ENCODE measurements at regions of chr4 and their contacts with region 1.

Region 1: GRCh38 chr4:140052050-140052449 is 101.9 kb downstream of the MAML3 start:
- DNase-seq: peak; percentile 73
- H3K4me3 ChIP-seq: no peak overlapping the region
- H3K27ac ChIP-seq: no peak overlapping the region
- H3K4me1 ChIP-seq: peaks cover 11% of the 10 kb centered on the region
- H3K27me3 ChIP-seq: no peaks in the 10 kb centered on the region

Region 2: DNA sequence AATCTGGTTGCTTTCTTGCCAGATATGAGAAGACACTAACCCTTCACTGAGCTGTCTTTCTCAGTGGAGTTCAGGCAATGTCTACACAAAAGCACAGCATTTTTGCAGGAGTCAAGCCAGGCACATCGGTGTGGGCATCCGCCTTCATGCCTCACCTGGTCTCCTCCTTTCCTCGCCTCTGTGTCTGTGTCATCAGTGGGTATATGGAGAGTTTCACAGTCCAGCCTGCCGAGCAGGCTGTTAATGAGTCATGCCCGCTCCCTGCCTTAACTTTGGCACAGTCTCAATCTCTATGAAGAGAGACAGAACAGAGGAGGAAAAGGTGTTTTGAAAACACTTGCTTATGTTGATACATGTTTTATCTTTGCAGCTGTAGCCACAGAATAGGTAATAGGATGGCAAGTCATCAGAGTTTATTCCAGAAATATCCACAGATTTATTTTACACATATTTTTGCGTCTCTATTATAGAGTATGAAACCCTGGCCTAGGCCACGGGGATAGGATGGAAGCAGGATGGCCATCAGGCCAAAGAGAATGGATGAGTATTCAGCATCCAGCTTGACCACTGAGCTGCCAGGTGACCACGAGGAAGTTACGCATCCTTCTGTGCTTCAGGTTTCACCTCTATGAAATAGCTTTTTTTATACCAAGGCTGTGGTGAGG is 134.7 kb after region 1 on chr4:
- in situ Hi-C with region 1: no loop called
- DNase-seq: peak; percentile 87
- H3K4me3 ChIP-seq: no peak overlapping the region
- H3K27ac ChIP-seq: no peak overlapping the region
- H3K4me1 ChIP-seq: 0 out of 2 replicates have a peak, but pooled peaks cover 8% of the 10 kb centered on the region
- H3K27me3 ChIP-seq: no peaks in the 10 kb centered on the region

Region 3: DNA sequence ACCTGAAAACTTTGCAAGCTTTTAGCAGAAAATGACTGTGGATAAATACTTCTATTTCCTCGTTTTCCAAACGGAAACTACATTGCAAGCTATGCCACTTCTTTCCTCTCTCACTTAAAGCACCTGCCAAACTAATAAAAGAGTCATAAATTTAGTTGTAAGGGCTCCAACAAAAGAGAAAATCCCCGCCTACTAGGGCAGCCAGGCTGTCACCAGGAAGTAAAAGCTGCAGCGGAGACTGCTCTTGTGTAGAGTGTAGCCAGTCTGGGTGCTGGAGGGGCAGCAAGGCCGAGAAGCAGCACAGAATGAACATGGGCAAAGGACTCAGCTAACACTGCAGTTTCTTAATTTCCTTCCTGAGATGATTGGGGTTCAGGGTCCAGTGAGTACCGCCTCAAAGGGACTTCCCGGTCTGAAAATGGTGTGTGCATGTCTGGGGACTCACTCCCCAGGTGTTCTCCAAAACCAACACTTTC is 191.3 kb after region 1 on chr4:
- in situ Hi-C with region 1: loop called (anchors 10 kb)
- DNase-seq: no peak
- H3K4me3 ChIP-seq: no peak overlapping the region
- H3K27ac ChIP-seq: no peak overlapping the region
- H3K4me1 ChIP-seq: peaks cover 10% of the 10 kb centered on the region
- H3K27me3 ChIP-seq: no peaks in the 10 kb centered on the region